CD8-positive, alpha-beta T cell (primary cell): ENCODE measurements at regions of chr3 and their contacts with region 1.

Region 1: DNA sequence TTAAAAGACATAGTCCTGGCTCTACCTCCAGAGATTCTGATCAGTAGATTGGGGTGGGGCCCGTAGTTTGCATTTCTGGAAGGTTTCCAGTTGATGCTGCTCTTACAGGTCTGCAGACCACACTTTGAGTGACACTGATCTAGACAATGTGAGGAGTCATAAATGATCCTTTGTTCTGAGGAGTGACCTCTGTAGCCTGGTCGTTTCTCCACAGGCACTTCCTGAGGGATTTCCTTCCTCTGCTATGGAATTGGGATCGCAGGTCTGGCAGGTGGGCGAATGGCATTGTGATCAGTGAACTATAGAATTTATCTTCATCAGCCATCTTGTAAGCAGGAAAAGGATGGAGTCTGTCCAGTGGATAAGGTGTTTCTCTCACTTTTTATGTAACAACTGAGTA is 5.5 kb downstream of the GFM1 start:
- DNase-seq: no peak
- ATAC-seq: no peak
- H3K4me3 ChIP-seq: no peak overlapping the region
- H3K4me3 Mint-ChIP-seq: no peak overlapping the region
- H3K27ac ChIP-seq: no peak overlapping the region
- H3K27ac Mint-ChIP-seq: no peak overlapping the region
- H3K4me1 ChIP-seq: peaks cover 8% of the 10 kb centered on the region
- H3K4me1 Mint-ChIP-seq: peaks cover 30% of the 10 kb centered on the region
- H3K27me3 ChIP-seq: no peaks in the 10 kb centered on the region
- H3K27me3 Mint-ChIP-seq: no peaks in the 10 kb centered on the region
- CTCF ChIP-seq: no peak

Region 2: GRCh38 chr3:158570999-158571974 is 78.5 kb before region 1 on chr3 and contains the start of gene MLF1:
- CTCF ChIA-PET with region 1: no interaction called
- POLR2A ChIA-PET with region 1: interaction called, 3 read pairs
- intact Hi-C with region 1: loop called in 1 of 2 experiments (anchors 5 kb)
- DNase-seq: peak; percentile 56 to 92 (median 73)
- ATAC-seq: peak; percentile 94
- H3K4me3 ChIP-seq: peak within 1 kb of the TSS; percentile 31 to 58
- H3K4me3 Mint-ChIP-seq: peak within 1 kb of the TSS; percentile 83
- H3K27ac ChIP-seq: peak within 1 kb of the TSS; percentile 41 to 49
- H3K27ac Mint-ChIP-seq: peak within 1 kb of the TSS; percentile 73
- H3K4me1 ChIP-seq: peaks cover 5% of the 10 kb centered on the region
- H3K4me1 Mint-ChIP-seq: peaks cover 11% of the 10 kb centered on the region
- H3K27me3 ChIP-seq: peaks cover 0 to 10% of the 10 kb centered on the region in 2 experiments
- H3K27me3 Mint-ChIP-seq: peaks cover 48% of the 10 kb centered on the region
- CTCF ChIP-seq: no peak
- total RNA-seq, gene MLF1: 4.1 to 7.0 TPM